Dorsolateral prefrontal cortex (tissue), 120 donors: ENCODE measurements at regions of chr7 and their contacts with region 1.

Region 1: GRCh38 chr7:28389504-28390395 is 22.6 kb upstream of the CREB5 start:
- DNase-seq: peak in 1 of 10 donors; percentile 33
- H3K4me3 ChIP-seq: peak overlapping the region in 58 of 59 donors; percentile 8 to 67 (median 44)
- H3K27ac ChIP-seq: peak overlapping the region in 34 of 59 donors; percentile 0 to 79 (median 52)
- H3K27me3 ChIP-seq: peaks cover 0 to 4% (median 0%) of the 10 kb centered on the region in 45 donors
- CTCF ChIP-seq: peak; percentile 73 to 92 (median 84)

Region 2: GRCh38 chr7:28002638-28003037 is 387.1 kb before region 1 on chr7:
- intact Hi-C with region 1: no loop called
- DNase-seq: no peak
- H3K4me3 ChIP-seq: no peak overlapping the region
- H3K27ac ChIP-seq: no peak overlapping the region
- H3K27me3 ChIP-seq: no peaks in the 10 kb centered on the region
- CTCF ChIP-seq: no peak

Region 3: DNA sequence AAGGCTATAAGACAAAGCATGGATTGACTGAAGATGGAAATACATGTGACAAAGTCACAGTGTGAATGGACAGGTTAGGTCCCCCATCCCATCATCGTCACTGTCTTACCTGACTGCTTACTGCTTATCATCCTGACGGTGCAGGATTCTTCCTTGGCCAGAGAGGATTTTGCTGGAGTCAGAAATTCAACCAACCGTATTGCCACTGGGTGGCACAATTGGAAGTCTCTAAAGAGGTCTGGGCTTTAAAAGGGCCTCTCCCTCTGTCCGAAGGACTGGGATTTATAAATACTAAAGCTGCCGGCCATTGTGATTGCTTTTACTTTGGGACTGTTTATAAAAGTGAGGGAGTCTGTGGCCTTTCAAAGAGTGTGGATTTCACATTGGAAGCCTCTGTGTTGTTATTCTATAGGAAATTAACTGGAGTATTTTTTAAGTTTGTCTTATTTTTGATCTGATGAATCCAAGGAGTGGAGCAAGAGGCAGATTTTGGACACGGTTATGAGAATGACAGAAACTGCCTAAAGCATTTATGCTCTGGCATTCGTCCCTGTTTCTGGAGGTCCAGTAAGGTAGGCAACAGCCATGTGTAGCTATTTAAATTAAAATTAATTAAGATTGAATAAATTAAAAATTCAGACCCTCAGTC is 90.8 kb before region 1 on chr7:
- intact Hi-C with region 1: loop called (anchors 10 kb)
- DNase-seq: peak in 6 of 10 donors; percentile 43 to 63 (median 48)
- H3K4me3 ChIP-seq: peak overlapping the region in 3 of 59 donors; percentile 4 to 24 (median 17)
- H3K27ac ChIP-seq: peak overlapping the region in 30 of 59 donors; percentile 0 to 72 (median 28)
- H3K27me3 ChIP-seq: no peaks in the 10 kb centered on the region
- CTCF ChIP-seq: peak; percentile 33 to 80 (median 62)